Naive thymus-derived CD4-positive, alpha-beta T cell (primary cell): ENCODE measurements at regions of chr12 and their contacts with region 1.

Region 1: GRCh38 chr12:109888179-109889020 is 8.1 kb upstream of the GLTP start:
- DNase-seq: peak in 4 of 9 donors; percentile 22 to 36 (median 27)
- ATAC-seq: peak; percentile 82
- H3K4me3 ChIP-seq: peak overlapping the region; percentile 14
- H3K4me3 Mint-ChIP-seq: peak overlapping the region; percentile 51 to 86 (median 72)
- H3K27ac ChIP-seq: peak overlapping the region; percentile 70
- H3K27ac Mint-ChIP-seq: peak overlapping the region; percentile 92 to 98 (median 95)
- H3K4me1 ChIP-seq: peaks cover 13 to 38% of the 10 kb centered on the region in 2 donors
- H3K4me1 Mint-ChIP-seq: peaks cover 15 to 44% (median 40%) of the 10 kb centered on the region in 7 donors
- H3K27me3 ChIP-seq: no peaks in the 10 kb centered on the region
- H3K27me3 Mint-ChIP-seq: peaks cover 0 to 9% (median 0%) of the 10 kb centered on the region in 5 donors

Region 2: DNA sequence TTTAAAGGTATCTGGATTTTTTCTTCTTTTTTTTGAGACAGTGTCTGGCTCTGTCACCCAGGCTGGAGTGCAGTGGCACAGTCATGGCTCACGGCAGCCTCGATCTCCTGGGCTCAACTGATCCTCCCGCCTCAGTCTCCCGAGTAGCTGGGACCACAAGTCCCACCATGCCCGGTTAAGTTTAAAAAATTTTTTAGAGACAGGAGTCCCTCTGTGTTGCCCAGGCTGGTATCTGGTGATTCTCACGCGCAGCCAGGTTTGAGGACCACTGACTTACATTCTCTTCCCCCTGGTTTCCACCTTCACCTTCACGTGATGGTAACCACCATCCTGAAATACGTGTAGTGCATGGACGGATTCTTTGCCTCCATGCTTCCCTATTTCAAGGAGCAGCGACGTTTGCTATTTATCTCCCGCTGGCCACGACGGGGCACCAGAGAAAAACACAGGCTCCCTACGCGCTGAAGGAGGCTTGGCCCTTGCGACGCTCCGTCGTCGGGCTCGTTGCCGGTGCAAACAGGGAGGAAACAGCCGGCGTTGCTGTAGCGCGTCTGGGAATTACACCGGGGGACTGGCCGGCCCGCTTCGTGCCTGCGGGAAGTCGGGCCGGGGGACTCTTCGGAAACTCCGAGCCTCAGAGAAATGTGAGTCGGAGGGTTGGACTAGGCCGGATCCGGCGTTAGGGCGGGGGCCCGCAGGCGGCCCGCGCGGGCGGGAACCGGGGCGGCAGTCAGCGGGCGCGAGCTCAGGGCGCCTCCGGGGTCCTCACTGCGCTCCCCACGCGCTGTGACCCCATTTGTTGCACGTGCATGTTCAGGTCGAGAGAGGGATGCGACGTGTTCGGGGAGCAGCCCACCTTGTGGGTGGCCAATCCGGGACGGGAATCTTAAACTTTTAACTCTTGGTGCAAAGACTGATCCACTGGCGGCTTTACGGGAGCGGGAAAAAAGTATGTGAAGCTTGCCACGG is 11.7 kb after region 1 on chr12 and contains the start of gene TCHP:
- CTCF ChIA-PET with region 1: interaction called, 6 read pairs
- POLR2A ChIA-PET with region 1: interaction called, 11 read pairs
- intact Hi-C with region 1: no loop called
- DNase-seq: peak; percentile 58 to 79 (median 75)
- ATAC-seq: peak; percentile 97
- H3K4me3 ChIP-seq: peak within 1 kb of the TSS; percentile 90
- H3K4me3 Mint-ChIP-seq: peak within 1 kb of the TSS; percentile 88 to 98 (median 93)
- H3K27ac ChIP-seq: peak within 1 kb of the TSS; percentile 74
- H3K27ac Mint-ChIP-seq: peak within 1 kb of the TSS; percentile 88 to 99 (median 93)
- H3K4me1 ChIP-seq: peaks cover 15 to 17% of the 10 kb centered on the region in 2 donors
- H3K4me1 Mint-ChIP-seq: peaks cover 17 to 33% (median 22%) of the 10 kb centered on the region in 7 donors
- H3K27me3 ChIP-seq: no peaks in the 10 kb centered on the region
- H3K27me3 Mint-ChIP-seq: no peaks in the 10 kb centered on the region
- total RNA-seq, gene TCHP: 21.7 to 40.0 (median 31.8) TPM